Cardiac septum (tissue), 1 donor: ENCODE measurements at regions of chr1 and their contacts with region 1.

Region 1: DNA sequence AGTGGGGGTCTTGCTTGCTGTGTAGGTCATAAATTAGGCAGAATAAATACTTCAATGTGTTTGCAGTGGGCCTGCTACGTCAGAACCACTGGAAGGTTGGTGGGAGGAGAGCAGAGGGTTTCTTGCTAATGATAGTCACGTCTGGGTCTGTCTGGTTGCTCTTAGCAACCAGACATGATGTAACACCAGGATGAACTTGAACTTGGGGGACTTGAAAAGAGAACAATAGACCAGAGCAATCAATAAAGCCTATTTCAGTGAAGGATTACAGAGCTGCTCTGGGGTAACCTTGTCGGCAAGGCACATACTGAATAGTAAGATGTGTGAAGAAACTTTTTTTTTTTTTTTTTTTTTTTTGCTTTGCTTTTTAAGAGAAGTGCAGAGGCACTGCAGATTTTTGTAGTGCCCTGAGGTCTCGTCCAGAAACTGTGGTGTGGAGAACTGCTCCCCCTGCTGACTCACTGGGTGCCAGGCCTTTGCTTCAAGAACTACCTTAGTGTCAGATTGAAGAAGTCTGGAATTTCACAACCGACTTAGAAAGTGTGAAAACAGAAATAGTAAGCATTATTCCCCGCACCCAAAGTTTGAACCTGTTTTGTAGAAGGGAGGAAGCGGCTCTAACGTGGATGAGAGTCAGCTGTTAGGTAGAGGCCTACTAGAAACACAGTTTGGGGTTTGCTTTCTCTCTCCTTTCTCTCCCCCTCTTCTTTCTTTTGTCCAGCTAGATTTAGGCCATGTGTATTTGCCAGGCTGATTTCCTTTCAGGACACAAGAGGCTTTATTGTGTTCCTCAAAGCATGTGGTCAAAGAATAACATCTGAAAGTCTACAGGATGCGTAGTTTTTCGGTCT is 271.6 kb downstream of the TM2D1 start:
- DNase-seq: peak; percentile 90

Region 2: GRCh38 chr1:60984062-60984799 is 469.1 kb before region 1 on chr1:
- intact Hi-C with region 1: loop called (anchors 5 kb)
- DNase-seq: peak; percentile 80

Region 3: DNA sequence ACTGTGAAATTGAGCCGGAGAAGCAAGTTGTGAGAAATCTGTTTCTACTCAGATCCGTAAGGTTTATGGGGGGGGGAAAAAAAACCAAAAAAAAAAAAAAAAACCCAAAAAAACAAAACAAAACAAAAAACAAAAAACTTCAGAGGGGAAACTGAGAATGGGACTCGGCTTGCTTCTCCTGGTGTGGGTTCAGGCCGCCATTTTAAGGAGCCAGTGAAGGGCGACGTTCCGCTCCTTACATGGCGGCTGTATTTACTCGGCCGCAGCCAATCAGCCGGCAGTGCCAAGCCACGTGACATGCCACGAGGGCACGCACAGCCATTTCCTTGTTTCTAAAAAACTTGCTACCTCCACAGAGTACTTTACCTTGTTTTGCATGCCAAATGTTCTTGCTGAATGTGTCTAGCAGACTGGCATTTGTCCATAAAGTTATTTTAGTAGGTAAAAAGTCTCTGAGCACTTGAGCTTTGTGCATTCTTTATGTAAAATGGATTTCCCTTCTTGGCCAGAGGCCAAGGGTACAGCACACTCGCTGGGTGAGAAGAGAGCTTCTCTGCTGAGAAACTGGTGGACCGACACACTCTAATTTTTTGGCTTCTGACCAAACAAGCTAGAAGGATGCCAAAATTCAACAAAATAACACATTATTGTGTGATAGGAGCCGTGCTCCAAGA is 269.2 kb before region 1 on chr1:
- intact Hi-C with region 1: loop called (anchors 10 kb)
- DNase-seq: peak; percentile 93

Region 4: GRCh38 chr1:61337981-61338848 is 115.1 kb before region 1 on chr1:
- intact Hi-C with region 1: loop called (anchors 5 kb)
- DNase-seq: peak; percentile 80

Region 5: DNA sequence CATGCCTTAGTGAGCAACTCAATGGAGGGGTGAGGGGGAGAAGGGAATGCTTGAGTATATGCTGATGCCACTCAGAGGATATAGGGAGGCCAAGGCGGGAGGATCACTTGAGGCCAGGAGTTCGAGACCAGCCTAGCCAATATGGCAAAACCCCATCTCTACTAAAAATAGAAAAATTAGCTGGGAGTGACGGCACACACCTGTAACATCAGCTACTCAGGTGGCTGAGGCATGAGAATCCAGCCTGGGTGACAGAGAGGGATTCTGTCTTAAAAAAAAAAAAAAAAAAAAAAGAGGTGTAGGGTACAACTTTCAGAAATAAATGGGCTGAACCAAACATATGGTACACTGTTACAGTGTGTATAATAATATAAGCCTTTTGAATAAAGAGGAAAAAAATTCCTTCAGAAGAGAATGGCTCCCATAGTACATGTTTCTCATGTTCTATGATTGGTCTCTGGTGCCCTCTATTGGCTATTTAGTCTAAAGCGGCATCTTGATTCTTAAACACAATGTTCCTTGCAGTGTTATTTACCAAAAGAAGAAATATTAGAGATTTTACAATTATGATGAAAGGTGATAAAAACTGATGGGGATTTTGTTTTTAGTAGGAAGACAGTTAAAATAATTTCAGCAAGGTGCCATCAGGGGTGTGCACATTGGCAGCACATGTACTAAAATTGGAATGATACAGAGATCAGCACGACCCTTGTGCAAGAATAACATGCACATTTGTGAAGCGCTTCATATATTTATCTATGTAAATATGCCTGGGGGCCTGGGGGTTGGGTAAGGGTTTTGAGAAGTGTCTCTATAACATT is 398.7 kb after region 1 on chr1:
- intact Hi-C with region 1: loop called (anchors 5 kb)
- DNase-seq: no peak